Mammary epithelial cell (primary cell): ENCODE measurements at regions of chr11 and their contacts with region 1.

Region 1: GRCh38 chr11:73177778-73178577 is 35.9 kb upstream of the FCHSD2 start:
- DNase-seq: peak; percentile 73
- H3K4me3 ChIP-seq: no peak overlapping the region
- H3K27ac ChIP-seq: no peak overlapping the region
- H3K4me1 ChIP-seq: peaks cover 21% of the 10 kb centered on the region
- H3K27me3 ChIP-seq: no peaks in the 10 kb centered on the region
- CTCF ChIP-seq: peak; percentile 54 to 89

Region 2: GRCh38 chr11:72471005-72471898 is 706.7 kb before region 1 on chr11:
- CTCF ChIA-PET with region 1: no interaction called
- dilution Hi-C with region 1: no loop called
- in situ Hi-C with region 1: no loop called
- intact Hi-C with region 1: loop called (anchors 10 kb)
- DNase-seq: peak; percentile 56
- H3K4me3 ChIP-seq: no peak overlapping the region
- H3K27ac ChIP-seq: no peak overlapping the region
- H3K4me1 ChIP-seq: no peaks in the 10 kb centered on the region
- H3K27me3 ChIP-seq: no peaks in the 10 kb centered on the region
- CTCF ChIP-seq: peak; percentile 82 to 85

Region 3: DNA sequence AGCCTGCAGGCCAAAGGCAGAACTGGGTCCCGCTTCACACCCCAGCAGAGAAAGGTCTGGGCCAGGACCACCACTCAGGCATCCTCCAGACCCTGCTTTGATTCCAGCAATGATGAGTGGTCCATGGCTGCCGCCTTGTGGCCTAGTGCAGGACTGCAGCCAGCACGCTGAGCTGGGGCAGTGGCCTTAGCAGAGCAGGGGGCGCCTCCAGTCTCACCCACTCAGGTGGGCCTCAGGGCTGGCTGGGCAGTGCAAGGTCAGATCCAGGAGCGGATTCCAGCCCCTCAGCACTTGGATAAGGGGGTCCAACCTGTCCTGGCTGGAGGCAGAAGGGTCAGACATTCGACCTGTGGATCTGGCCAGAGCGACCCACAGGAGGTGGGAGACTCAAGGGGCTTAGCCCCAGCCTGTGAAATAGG is 494.2 kb before region 1 on chr11:
- CTCF ChIA-PET with region 1: interaction called, 8 read pairs
- dilution Hi-C with region 1: no loop called
- in situ Hi-C with region 1: no loop called
- intact Hi-C with region 1: loop called (anchors 1 kb)
- DNase-seq: no peak
- H3K4me3 ChIP-seq: no peak overlapping the region
- H3K27ac ChIP-seq: no peak overlapping the region
- H3K4me1 ChIP-seq: peaks cover 4% of the 10 kb centered on the region
- H3K27me3 ChIP-seq: no peaks in the 10 kb centered on the region
- CTCF ChIP-seq: peak; percentile 88 to 94

Region 4: GRCh38 chr11:72736452-72737069 is 441.4 kb before region 1 on chr11:
- CTCF ChIA-PET with region 1: no interaction called
- dilution Hi-C with region 1: loop called (anchors 10 kb)
- in situ Hi-C with region 1: no loop called
- intact Hi-C with region 1: no loop called
- DNase-seq: peak; percentile 77
- H3K4me3 ChIP-seq: no peak overlapping the region
- H3K27ac ChIP-seq: peak overlapping the region; percentile 30
- H3K4me1 ChIP-seq: peaks cover 37% of the 10 kb centered on the region
- H3K27me3 ChIP-seq: no peaks in the 10 kb centered on the region
- CTCF ChIP-seq: no peak

Region 5: DNA sequence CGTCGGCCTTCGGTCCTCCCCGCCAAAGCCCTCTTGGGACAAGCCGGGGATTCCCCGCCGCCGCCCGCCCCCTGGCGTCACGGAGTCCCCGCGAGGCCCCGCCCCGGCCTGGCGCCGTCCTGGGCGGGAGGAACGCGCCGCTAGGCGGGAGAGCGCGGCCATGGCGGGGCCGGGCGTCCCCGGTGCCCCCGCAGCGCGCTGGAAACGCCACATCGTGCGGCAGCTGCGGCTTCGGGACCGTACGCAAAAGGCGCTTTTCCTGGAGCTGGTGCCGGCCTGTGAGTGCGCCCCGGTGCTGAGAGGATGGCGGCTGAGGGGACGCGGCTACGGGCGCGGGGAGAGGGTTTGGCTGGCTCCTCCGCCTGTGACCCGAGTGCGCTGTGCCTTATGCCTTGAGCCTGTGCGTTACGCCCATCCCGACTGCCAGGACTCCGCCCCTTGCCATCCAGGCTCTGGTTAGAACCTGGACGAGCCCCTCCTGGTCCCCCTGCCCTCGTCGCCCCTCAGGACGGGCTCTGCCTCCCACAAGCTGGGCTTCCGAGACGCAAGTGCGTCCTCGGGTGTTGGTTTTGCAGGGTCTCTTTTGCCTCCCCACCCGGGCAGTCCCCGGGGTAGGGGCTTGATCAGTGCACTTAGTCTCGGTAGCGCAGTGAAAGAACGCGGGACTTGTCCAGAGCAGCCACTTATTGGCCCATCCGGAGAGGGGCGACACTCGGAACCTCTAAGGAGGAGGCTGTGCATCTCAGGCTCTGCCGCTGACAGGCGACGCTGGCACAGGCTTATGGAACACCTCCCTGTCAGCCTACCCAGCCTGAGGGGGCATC is 363.5 kb before region 1 on chr11 and contains the start of gene ATG16L2:
- CTCF ChIA-PET with region 1: no interaction called
- dilution Hi-C with region 1: no loop called
- in situ Hi-C with region 1: no loop called
- intact Hi-C with region 1: loop called (anchors 5 kb)
- DNase-seq: peak; percentile 89
- H3K4me3 ChIP-seq: peak within 1 kb of the TSS; percentile 46 to 72 (median 58)
- H3K27ac ChIP-seq: peak within 1 kb of the TSS; percentile 88
- H3K4me1 ChIP-seq: peaks cover 22% of the 10 kb centered on the region
- H3K27me3 ChIP-seq: no peaks in the 10 kb centered on the region
- CTCF ChIP-seq: peak in 1 of 2 donors; percentile 35
- total RNA-seq, gene ATG16L2: 3.3 to 23.0 TPM

Region 6: DNA sequence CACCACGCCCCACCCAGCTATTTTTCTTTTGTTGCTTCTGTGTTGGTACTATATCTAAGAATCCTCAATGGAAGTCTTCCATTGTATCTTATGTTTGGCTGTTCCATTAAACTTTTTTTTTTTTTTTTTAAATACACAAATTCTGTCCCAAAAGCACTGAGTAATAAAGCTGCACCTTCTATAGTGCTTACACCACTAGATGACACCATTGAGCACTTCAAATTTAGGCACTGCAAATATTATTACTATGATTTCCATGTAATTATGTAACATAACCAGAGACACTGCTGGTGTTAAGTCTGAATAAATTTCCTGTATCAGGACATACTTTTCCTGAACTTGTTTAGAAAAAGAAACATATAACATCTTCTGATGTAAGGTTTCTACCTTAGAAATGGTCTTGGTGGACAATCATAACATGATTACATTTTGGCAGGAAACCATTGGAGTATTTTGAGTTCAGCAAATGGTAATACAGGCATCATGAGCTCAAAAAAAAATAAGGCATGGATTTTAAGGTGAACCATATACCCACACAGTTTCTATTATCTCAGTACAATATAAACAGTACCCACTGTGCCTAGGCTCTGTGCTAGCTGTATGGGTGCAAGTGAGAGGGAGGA is 253.3 kb before region 1 on chr11:
- CTCF ChIA-PET with region 1: interaction called, 4 read pairs
- dilution Hi-C with region 1: no loop called
- in situ Hi-C with region 1: loop called in 1 of 2 experiments (anchors 25 kb)
- intact Hi-C with region 1: loop called (anchors 1 kb)
- DNase-seq: peak; percentile 21
- H3K4me3 ChIP-seq: no peak overlapping the region
- H3K27ac ChIP-seq: no peak overlapping the region
- H3K4me1 ChIP-seq: no peaks in the 10 kb centered on the region
- H3K27me3 ChIP-seq: no peaks in the 10 kb centered on the region
- CTCF ChIP-seq: peak; percentile 64 to 67

Region 7: DNA sequence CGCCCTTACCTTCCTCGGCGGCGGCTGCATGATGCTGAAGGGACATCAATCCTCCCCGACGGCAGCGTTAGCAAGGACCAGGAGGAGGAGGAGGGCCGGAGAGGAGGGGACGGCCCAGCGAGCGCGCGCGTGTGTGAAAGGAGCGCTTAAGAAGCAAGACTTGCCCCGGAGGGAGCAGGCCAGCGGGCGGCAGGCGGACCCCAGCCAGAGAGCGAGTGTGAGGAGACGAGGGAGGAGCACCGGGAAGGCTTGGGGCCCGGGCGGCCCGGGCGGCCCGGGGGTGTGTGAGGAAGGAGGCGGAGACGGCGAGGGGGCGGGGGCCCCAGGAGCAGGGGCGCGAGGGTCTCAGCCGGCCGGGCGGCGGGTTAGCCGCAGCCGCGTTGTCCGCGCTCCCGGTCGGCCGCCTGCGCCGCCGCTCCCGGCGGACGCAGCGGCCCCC is 36.1 kb before region 1 on chr11:
- CTCF ChIA-PET with region 1: interaction called, 4 read pairs
- dilution Hi-C with region 1: no loop called
- in situ Hi-C with region 1: no loop called
- intact Hi-C with region 1: loop called (anchors 2 kb)
- DNase-seq: peak; percentile 64
- H3K4me3 ChIP-seq: peak overlapping the region; percentile 92 to 99 (median 98)
- H3K27ac ChIP-seq: peak overlapping the region; percentile 49
- H3K4me1 ChIP-seq: peaks cover 20% of the 10 kb centered on the region
- H3K27me3 ChIP-seq: no peaks in the 10 kb centered on the region
- CTCF ChIP-seq: no peak

Region 8: DNA sequence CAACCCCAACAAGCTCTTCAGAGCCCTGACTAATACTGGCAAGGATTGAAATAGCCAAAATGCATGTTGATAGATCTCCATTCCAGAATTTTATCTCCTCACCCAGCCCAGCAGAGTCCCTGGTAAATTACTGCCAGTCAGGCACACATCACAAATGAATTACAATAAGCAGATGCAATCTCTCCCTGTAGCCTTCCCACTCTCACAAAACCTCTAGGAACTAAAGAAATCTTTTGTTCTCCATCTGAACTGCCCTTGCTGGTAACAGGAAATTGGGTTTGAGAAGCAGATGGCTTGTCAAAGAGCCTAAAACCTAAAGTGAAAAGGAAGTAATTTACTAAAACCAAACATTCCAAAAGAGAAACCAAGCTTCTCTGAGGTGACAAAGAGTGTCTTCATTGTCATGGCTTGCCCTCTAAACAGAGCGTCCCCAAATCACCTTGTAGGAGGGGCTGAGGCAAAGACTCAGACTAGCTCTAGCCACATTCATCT is 360.4 kb after region 1 on chr11:
- CTCF ChIA-PET with region 1: no interaction called
- dilution Hi-C with region 1: no loop called
- in situ Hi-C with region 1: no loop called
- intact Hi-C with region 1: no loop called
- DNase-seq: no peak
- H3K4me3 ChIP-seq: no peak overlapping the region
- H3K27ac ChIP-seq: no peak overlapping the region
- H3K4me1 ChIP-seq: peaks cover 3% of the 10 kb centered on the region
- H3K27me3 ChIP-seq: no peaks in the 10 kb centered on the region
- CTCF ChIP-seq: no peak